ENCODE measurements at regions of chr1 and their contacts with region 1.

Region 1: DNA sequence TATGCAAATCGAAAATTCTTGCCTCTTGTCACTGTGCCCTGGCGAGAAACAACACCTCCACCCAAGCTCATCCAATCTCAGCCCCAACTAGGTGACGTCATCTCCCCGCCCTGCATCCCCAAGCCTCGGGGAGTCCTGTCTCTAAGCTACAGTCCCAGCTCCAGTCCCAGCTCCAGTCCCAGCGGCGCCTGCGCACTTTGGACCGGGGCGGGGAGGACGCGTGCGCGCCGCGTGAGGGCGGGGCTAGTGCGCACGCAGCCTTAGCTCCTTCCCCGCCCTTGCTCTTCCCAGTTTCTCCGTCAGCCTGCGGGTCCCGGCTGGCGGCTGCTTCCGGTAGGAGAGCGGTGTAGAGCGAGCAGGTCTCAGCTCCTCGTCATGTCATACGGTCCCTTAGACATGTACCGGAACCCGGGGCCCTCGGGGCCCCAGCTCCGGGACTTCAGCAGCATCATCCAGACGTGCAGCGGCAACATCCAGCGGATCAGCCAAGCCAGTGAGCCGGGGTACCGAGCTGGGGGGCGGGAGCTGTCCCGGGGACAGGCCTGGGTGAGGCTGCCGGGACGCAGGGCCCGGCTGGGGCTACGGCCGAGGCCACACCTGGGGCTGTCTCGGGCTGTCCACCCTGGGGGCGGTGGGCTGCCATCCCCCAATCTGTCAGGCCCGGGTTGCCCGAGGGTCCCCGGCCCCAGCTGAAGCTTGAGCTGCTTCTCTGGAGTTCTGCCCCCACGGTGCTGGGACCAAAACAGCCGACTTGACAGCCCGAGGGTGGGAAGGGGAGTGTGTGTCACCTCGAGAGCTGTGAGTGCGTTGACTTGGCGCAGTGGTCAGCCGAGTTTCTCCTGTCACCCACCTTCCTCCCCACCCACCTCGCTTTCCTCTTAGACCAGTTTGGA is at the start of gene STX12:
- DNase-seq: peak; percentile 99
- CTCF ChIP-seq: no peak

Region 2: GRCh38 chr1:27725374-27726173 is 47.6 kb before region 1 on chr1 and contains the start of gene FAM76A:
- CTCF ChIA-PET with region 1: interaction called, 11 read pairs
- POLR2A ChIA-PET with region 1: interaction called, 11 read pairs
- DNase-seq: peak; percentile 100
- CTCF ChIP-seq: peak; percentile 66

Region 3: GRCh38 chr1:27760426-27760825 is 12.8 kb before region 1 on chr1:
- CTCF ChIA-PET with region 1: interaction called, 13 read pairs
- POLR2A ChIA-PET with region 1: interaction called, 4 read pairs
- DNase-seq: no peak
- CTCF ChIP-seq: no peak